ENCODE measurements at regions of chr15 and their contacts with region 1.

Region 1: GRCh38 chr15:69413822-69414700 is at the start of gene KIF23:
- H3K4me3 ChIP-seq: peak within 1 kb of the TSS; percentile 93
- H3K27ac ChIP-seq: peak within 1 kb of the TSS; percentile 98
- H3K4me1 ChIP-seq: peaks cover 12% of the 10 kb centered on the region
- CTCF ChIP-seq: 0 out of 2 replicates have a peak, but pooled peaks have one; percentile 14

Region 2: GRCh38 chr15:69394556-69395282 is 19.3 kb before region 1 on chr15:
- CTCF ChIA-PET with region 1: interaction called, 11 read pairs
- POLR2A ChIA-PET with region 1: no interaction called
- H3K4me3 ChIP-seq: no peak overlapping the region
- H3K27ac ChIP-seq: no peak overlapping the region
- H3K4me1 ChIP-seq: no peaks in the 10 kb centered on the region; the same call in 1 of the 2 replicates
- CTCF ChIP-seq: peak; percentile 97

Region 3: DNA sequence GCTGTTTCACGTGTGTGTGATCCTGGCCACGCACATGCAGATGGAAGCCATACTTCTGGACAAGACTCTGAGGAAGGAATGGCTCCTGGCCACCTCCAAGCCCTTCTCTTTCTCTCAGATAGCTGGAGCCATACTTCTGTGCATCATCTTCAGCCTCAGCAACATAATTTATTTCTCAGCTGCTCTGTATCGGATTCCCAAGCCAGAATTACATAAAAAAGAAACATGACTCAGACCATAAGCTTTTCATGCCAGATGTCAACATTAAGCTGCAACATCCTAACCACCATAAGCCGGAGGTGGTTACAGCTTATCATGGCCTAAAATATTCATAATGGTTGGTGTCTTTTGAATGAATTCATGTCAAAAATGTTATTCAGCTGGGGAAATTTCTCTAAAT is 10.5 kb before region 1 on chr15:
- CTCF ChIA-PET with region 1: interaction called, 4 read pairs
- POLR2A ChIA-PET with region 1: interaction called, 11 read pairs
- H3K4me3 ChIP-seq: no peak overlapping the region
- H3K27ac ChIP-seq: no peak overlapping the region
- H3K4me1 ChIP-seq: no peaks in the 10 kb centered on the region
- CTCF ChIP-seq: no peak

Region 4: DNA sequence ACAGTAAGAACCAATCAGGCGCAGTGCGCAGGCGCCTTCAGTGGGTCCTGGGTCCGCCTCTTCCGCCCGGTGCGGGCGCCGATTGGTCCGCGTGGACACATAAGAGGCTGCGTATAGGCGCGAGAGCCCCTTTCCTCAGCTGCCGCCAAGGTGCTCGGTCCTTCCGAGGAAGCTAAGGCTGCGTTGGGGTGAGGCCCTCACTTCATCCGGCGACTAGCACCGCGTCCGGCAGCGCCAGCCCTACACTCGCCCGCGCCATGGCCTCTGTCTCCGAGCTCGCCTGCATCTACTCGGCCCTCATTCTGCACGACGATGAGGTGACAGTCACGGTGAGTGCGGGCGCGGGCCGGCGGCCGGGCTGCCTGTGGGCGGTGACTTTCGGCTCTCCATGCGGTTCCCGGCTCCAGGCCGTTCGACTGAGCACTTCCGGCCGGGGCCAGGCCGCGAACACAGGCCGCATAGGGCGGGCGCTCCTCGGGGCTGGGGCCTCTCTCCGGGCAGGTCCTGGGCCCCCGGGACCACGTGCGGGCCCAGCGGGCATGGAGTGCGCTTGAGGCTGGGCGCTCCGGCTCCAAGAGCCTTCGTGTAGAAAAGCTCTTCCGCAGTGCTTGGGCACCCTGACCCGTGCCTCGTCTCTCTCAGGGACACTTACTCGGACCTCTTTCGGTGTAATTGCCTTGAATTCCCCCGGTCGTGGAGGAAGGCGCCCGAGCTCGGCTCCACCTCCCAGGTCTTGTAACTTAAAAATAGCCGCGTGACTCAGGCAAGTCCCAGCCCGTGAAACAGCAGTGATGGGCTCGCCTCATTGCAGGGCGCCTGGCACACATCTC is 38.8 kb after region 1 on chr15 and contains the start of gene RPLP1:
- CTCF ChIA-PET with region 1: no interaction called
- POLR2A ChIA-PET with region 1: interaction called, 30 read pairs
- H3K4me3 ChIP-seq: peak within 1 kb of the TSS; percentile 89
- H3K27ac ChIP-seq: peak within 1 kb of the TSS; percentile 78
- H3K4me1 ChIP-seq: peaks cover 10% of the 10 kb centered on the region
- CTCF ChIP-seq: peak; percentile 66

Region 5: GRCh38 chr15:69462493-69463181 is 48.6 kb after region 1 on chr15:
- CTCF ChIA-PET with region 1: interaction called, 4 read pairs
- POLR2A ChIA-PET with region 1: interaction called, 16 read pairs
- H3K4me3 ChIP-seq: peak overlapping the region; percentile 34
- H3K27ac ChIP-seq: peak overlapping the region; percentile 42
- H3K4me1 ChIP-seq: peaks cover 8% of the 10 kb centered on the region; the same call in 1 of the 2 replicates
- CTCF ChIP-seq: peak; percentile 98

Region 6: GRCh38 chr15:69823218-69823907 is 409.3 kb after region 1 on chr15:
- CTCF ChIA-PET with region 1: no interaction called
- POLR2A ChIA-PET with region 1: no interaction called
- H3K4me3 ChIP-seq: no peak overlapping the region
- H3K27ac ChIP-seq: no peak overlapping the region
- H3K4me1 ChIP-seq: peaks cover 13% of the 10 kb centered on the region
- CTCF ChIP-seq: no peak

Measured in HEK293 (cell line).